Calu3 (cell line): ENCODE measurements at regions of chr11 and their contacts with region 1.

Region 1: DNA sequence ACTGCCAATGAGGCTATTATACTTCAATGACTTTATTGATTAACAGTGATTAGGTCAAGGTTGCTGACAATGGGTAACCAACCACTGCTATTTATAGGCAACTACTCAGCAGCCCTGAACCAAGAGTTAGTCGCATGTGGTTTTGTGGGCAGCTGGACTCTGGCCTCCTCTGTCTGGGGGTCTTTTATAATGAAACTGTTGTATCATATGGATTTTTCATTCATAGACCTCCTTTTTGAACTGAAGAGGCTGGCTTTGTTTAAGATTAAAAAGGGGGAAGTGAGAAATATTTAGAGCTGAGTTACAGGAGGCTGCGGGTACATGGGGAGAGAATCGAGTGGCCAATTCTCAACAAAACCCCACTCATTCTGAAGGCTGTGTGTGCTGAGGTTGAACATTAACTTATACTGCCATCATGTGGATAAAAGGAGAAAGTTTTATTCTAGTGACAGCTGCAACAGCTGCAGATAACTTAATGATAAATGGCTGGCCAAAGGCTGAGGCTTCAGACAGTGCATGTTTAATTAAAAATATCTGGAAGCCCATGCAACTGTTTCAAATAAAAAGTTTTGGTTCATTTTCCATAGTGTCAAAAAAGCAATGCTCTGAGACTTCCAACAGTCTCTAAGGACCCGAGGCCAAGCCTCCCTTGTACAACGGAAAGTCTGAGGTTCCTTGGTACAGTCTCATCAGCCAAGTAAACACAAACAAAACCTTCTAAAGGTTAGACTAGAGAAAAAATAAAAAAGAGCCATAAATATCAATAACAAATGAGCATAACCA is 682.6 kb downstream of the KCNA4 start:
- DNase-seq: peak; percentile 10
- H3K4me3 Mint-ChIP-seq: no peak overlapping the region
- H3K27ac Mint-ChIP-seq: no peak overlapping the region
- H3K4me1 Mint-ChIP-seq: peaks cover 37% of the 10 kb centered on the region
- H3K27me3 Mint-ChIP-seq: no peaks in the 10 kb centered on the region
- CTCF ChIP-seq: peak; percentile 44

Region 2: DNA sequence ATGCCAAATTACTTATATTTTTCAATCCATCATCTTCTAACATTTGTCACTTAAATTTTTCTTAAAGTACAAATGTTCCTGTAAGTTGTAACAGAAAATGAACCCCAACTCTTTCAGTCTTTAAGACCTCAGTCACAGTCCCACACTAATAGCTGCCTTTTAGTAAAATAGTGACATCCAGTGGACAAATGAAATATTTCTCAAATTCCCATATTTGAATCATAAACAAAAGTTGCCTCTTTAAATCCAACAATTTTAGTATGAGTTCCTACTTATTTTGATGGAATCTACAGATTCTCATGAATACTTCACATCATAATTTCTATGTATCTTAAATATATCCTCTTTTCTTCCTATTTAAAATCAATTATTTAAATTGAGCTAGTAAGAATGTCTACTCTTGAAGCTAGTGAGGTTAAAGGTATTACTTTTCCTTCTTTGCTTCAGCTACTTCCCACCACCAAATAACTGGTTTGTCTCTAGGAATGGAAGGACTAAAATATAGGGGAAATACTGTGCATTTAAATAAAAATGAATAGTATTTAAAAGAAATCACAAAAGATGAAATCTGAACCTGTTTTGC is 1836.8 kb before region 1 on chr11:
- CTCF ChIA-PET with region 1: no interaction called
- intact Hi-C with region 1: loop called (anchors 5 kb)
- DNase-seq: no peak
- H3K4me3 Mint-ChIP-seq: no peak overlapping the region
- H3K27ac Mint-ChIP-seq: no peak overlapping the region
- H3K4me1 Mint-ChIP-seq: peaks cover 8% of the 10 kb centered on the region
- H3K27me3 Mint-ChIP-seq: no peaks in the 10 kb centered on the region
- CTCF ChIP-seq: peak; percentile 25

Region 3: GRCh38 chr11:28107748-28108618 is 1226.2 kb before region 1 on chr11 and contains the starts of genes KIF18A and METTL15:
- CTCF ChIA-PET with region 1: no interaction called
- intact Hi-C with region 1: loop called (anchors 5 kb)
- DNase-seq: peak; percentile 99
- H3K4me3 Mint-ChIP-seq: peak within 1 kb of the TSS; percentile 87
- H3K27ac Mint-ChIP-seq: peak within 1 kb of the TSS; percentile 97
- H3K4me1 Mint-ChIP-seq: peaks cover 22% of the 10 kb centered on the region
- H3K27me3 Mint-ChIP-seq: no peaks in the 10 kb centered on the region
- CTCF ChIP-seq: no peak
- total RNA-seq, gene KIF18A: 29.9 and 31.5 TPM in 2 replicates
- total RNA-seq, gene METTL15: 19.0 and 19.4 TPM in 2 replicates

Region 4: GRCh38 chr11:28836285-28837081 is 497.7 kb before region 1 on chr11:
- CTCF ChIA-PET with region 1: no interaction called
- intact Hi-C with region 1: loop called (anchors 1 kb)
- DNase-seq: peak; percentile 60
- H3K4me3 Mint-ChIP-seq: peak overlapping the region; percentile 59
- H3K27ac Mint-ChIP-seq: peak overlapping the region; percentile 96
- H3K4me1 Mint-ChIP-seq: peaks cover 55% of the 10 kb centered on the region
- H3K27me3 Mint-ChIP-seq: no peaks in the 10 kb centered on the region
- CTCF ChIP-seq: no peak

Region 5: DNA sequence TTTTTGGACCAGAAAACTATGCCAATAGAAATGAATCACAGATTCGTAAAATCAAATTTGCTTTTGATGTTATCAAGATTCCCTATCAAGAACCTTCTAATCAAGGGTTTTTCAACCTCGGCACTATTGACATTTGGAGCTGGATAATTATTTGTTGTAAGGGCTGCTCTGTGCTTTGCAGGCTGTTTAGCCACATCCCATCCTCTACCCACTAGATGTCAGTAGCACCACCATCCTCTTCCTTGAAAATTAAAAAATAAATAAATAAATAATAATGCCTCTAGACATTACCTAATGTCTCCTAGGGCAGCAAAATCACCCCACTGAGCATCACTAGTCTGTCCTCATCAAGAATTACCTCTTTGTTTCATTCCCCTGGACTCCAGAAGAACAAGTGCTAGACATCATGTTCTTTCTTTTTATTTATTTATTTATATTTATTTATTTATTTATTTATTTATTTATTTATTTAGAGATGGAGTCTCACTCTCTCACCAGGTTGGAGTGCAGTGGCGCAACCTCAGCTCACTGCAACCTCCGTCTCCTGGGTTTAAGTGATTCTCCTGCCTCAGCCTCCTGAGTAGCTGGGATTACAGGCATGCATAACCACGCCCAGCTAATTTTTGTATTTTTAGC is 62.0 kb before region 1 on chr11:
- CTCF ChIA-PET with region 1: interaction called, 5 read pairs
- intact Hi-C with region 1: loop called (anchors 2 kb)
- DNase-seq: peak; percentile 17
- H3K4me3 Mint-ChIP-seq: no peak overlapping the region
- H3K27ac Mint-ChIP-seq: no peak overlapping the region
- H3K4me1 Mint-ChIP-seq: peaks cover 9% of the 10 kb centered on the region
- H3K27me3 Mint-ChIP-seq: no peaks in the 10 kb centered on the region
- CTCF ChIP-seq: no peak

Region 6: GRCh38 chr11:29352273-29352795 is 18.1 kb after region 1 on chr11:
- CTCF ChIA-PET with region 1: no interaction called
- intact Hi-C with region 1: no loop called
- DNase-seq: no peak
- H3K4me3 Mint-ChIP-seq: no peak overlapping the region
- H3K27ac Mint-ChIP-seq: no peak overlapping the region
- H3K4me1 Mint-ChIP-seq: peaks cover 14% of the 10 kb centered on the region
- H3K27me3 Mint-ChIP-seq: no peaks in the 10 kb centered on the region
- CTCF ChIP-seq: no peak